ENCODE measurements at regions of chr6 and their contacts with region 1.

Region 1: GRCh38 chr6:33417903-33418689 is at the start of gene CUTA:
- DNase-seq: peak; percentile 99 to 100 (median 100)
- ATAC-seq: peak; percentile 95
- H3K4me3 ChIP-seq: peak within 1 kb of the TSS; percentile 75 to 77
- H3K27ac ChIP-seq: peak within 1 kb of the TSS; percentile 91 to 93
- H3K4me1 ChIP-seq: peaks cover 13 to 40% of the 10 kb centered on the region in 2 donors
- H3K27me3 ChIP-seq: no peaks in the 10 kb centered on the region
- CTCF ChIP-seq: peak in 1 of 2 donors; percentile 23
- polyA plus RNA-seq, gene CUTA: 165 to 189 (median 177) TPM

Region 2: GRCh38 chr6:33317669-33318425 is 100.2 kb before region 1 on chr6 and contains the start of gene ZBTB22:
- intact Hi-C with region 1: loop called in 1 of 2 experiments (anchors 10 kb)
- DNase-seq: peak; percentile 98
- ATAC-seq: peak; percentile 75
- H3K4me3 ChIP-seq: peak within 1 kb of the TSS; percentile 53 to 68
- H3K27ac ChIP-seq: peak within 1 kb of the TSS; percentile 85 to 86
- H3K4me1 ChIP-seq: peaks cover 32 to 73% of the 10 kb centered on the region in 2 donors
- H3K27me3 ChIP-seq: no peaks in the 10 kb centered on the region
- CTCF ChIP-seq: no peak
- polyA plus RNA-seq, gene ZBTB22: 21.8 to 29.3 (median 25.5) TPM

Measured in left lung (tissue), 14 donors.